PC-9 (cell line): ENCODE measurements at regions of chr17 and their contacts with region 1.

Region 1: GRCh38 chr17:17151962-17152361 is 54.2 kb downstream of the PLD6 start:
- DNase-seq: peak in 1 of 2 experiments; percentile 83
- H3K4me3 ChIP-seq: no peak overlapping the region
- H3K27ac ChIP-seq: peak overlapping the region; percentile 28; the same call in 1 of the 2 replicates
- H3K4me1 ChIP-seq: no peaks in the 10 kb centered on the region
- H3K27me3 ChIP-seq: no peaks in the 10 kb centered on the region
- CTCF ChIP-seq: no peak

Region 2: DNA sequence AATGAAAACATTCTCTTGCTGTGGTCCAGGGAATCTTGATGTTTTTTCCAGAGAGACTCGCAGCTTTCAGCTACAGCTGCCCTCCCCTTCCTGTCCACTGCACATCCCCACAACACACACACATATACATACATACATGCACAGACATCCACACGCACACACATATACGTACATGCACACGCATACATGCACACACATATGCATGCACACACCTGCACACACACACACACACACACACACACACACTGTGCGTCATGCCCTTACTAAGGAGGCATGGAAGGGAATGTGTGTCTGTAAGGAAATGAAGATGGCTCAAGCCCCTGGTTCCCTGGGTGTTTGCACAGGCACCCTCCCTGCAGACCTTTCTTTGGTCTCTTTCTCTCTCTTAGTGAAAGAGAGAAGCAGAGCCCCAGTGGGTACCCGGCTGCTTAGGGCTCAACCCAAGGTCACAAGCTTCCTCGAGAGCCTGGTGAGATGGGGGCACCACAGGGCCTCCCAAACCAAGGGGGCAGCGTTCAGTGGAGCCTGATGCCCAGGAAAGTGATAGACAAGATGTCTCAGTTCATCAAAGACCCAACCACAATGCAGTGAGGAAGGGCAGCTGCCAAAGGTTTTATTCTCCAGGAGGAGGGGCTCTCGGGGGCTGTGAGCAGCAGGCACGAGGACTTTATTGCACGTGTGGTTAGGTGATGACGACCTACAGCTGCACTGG is 213.3 kb before region 1 on chr17:
- CTCF ChIA-PET with region 1: no interaction called
- POLR2A ChIA-PET with region 1: no interaction called
- intact Hi-C with region 1: no loop called
- DNase-seq: no peak
- H3K4me3 ChIP-seq: no peak overlapping the region
- H3K27ac ChIP-seq: no peak overlapping the region
- H3K4me1 ChIP-seq: no peaks in the 10 kb centered on the region
- H3K27me3 ChIP-seq: no peaks in the 10 kb centered on the region
- CTCF ChIP-seq: no peak

Region 3: DNA sequence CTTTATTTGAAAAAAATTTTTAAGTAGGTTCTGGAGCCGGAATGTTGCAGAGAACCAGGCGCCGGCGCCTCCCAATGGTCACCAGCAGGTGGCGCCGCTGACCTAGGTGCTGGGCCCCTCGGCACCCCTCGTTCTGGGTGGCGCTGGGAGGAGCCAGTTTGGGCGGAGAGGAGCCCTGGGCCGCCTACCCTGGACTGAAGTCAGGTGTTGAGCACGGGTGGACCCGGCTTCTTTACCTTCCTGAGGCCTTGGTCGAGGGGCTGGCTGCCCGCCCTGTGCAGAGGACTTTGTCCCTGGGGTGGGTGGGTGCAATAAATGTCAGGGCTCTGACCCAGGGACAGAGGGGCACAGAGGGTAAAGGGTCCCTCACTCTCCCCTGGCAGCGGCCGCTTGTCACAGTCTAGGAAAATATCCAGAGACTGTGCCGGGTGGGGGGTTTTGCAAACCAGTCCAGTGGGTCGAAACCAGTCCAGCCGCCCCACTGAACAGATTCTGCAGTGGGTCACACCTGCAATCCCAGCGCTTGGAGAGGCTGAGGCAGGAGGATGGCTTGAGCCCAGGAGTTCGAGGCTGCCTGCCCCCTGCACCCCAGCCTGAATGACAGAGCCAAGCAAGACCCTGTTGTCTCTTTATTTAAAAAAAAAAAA is 150.0 kb before region 1 on chr17:
- CTCF ChIA-PET with region 1: no interaction called
- POLR2A ChIA-PET with region 1: no interaction called
- intact Hi-C with region 1: loop called (anchors 2 kb)
- DNase-seq: peak; percentile 58 to 88
- H3K4me3 ChIP-seq: no peak overlapping the region
- H3K27ac ChIP-seq: no peak overlapping the region
- H3K4me1 ChIP-seq: peaks cover 4% of the 10 kb centered on the region; the same call in 1 of the 2 replicates
- H3K27me3 ChIP-seq: no peaks in the 10 kb centered on the region
- CTCF ChIP-seq: peak; percentile 98